ENCODE measurements at regions of chr11 and their contacts with region 1.

Region 1: DNA sequence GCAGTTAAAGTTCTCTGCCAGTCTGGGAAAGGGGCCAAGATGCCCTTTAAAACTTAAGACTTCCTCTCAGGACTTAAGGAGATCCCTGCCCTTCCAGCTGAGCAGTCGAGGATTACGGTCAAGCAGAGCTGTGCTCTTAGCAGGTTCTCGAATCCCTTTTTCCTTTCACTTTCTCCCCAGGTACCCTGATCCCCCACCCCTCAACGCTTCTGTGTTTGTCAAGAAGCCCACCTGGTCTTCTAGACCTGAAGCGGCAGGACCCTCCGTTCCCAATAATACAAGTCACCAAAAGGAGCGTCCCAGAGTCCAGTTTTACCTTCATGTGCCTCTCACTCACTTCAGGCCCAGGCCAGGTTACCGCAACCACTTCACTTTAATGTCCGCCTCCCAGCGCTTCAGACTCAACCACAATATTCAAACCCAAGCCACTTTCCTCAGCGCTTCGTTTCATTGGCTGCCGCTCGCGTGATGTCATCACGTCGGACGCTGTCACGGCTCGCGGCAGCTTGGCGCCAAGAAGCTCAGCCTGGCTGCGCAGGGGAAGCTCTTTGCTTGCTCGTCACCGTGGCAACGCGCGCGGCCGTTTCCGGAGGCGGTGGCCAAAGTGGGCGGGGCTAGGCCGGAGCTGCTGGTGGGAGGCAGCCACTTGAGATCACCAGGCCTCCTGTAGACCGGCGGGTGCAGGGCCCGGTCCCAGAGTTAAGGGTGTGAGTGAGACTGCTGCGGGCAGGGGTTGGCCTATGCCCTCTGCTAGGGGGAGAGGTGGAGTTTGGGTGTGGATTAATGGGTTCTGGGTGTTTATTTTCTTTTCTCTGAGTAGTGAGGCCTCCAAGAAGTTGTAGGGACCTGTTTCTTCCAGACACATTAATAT is at the starts of genes KIF18A and METTL15:
- DNase-seq: peak; percentile 100
- ATAC-seq: peak; percentile 92
- total RNA-seq, gene KIF18A: 1.9 to 2.8 TPM
- total RNA-seq, gene METTL15: 15.7 to 18.9 TPM

Region 2: DNA sequence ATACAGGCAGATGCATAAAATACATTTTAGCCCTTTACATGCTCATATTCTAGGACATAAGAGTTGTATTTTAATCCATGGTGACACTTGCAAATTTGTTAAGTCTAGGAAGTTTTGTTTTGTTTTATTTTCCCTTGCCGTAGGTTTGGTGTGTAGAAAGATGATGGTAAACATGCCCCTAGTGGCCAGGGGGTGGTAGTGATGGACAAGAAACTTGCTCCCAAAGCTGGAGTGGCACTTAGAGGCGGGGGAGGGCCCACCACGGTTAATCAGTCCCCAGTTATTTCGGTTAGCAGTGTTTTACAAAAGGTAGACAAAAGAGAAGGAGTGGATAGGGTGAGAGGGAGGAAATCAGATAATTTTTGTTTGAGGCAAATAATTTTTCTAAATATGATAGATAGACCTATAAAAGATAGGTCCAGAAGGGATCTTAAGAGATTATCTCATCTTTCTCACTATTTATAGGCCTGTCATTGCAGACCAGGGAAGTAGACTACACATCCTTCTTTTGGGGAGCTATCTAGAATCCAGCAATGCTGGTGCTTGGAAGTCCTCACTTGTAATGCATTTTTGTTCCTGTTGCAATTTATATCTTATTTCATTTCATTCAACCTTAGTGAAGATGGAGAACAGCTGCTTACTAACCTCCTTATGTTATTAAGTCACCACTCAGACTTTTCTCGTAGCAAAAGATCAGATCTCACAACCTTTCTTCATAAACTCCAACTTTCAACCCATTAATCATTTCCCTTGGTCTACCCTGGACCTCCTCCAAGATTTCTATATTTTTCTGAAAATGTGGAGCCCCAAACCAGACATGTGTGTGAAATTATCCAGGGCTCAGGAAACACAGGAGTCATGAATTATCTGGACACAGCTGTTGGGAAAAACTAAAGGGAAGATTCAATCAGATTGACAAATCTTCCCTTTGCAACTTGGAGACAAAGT is 401.8 kb before region 1 on chr11:
- intact Hi-C with region 1: loop called in 1 of 2 experiments (anchors 10 kb)
- DNase-seq: peak in 1 of 2 donors; percentile 17
- ATAC-seq: peak; percentile 62

Region 3: DNA sequence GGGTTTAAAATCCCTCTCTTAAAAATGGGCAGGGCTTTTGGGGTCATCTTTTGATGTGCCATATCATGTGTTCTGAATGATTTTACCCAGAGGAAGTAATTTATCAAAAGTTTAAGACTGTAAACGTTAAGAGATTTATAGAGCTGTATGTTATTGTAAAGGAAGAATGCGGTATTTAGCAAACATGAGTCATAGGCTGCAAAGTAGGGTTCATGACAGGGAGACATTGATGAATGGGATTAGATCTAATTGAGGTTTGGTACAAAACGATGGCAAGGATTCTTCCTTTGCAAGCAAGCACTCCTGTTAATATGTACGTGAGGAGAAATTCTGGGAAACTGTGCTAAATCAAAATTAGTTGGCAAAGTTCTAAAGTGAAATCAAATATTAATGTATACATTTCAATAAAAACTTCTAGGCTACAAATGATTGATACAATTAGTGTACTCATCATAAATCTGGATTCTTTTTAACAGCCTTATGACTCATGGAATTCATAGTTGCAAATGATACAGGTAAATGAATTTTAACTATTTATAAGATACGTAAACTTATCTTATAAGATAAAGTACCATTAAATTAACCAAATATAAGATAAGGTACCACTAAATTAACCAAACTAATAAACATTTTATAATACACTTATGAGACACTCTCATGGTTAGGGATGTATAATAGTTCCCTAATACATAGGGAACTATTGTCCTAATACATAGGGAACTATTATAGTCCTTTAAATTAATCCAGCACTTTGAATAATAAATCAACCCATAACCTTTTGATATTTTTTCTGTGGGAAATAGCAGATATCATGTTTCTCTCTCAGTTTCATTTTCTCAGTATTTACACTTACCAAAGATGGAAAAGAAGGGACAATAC is 58.4 kb before region 1 on chr11:
- intact Hi-C with region 1: loop called in 1 of 2 experiments (anchors 10 kb)
- DNase-seq: no peak
- ATAC-seq: peak; percentile 63